ENCODE measurements at regions of chr14 and their contacts with region 1.

Region 1: DNA sequence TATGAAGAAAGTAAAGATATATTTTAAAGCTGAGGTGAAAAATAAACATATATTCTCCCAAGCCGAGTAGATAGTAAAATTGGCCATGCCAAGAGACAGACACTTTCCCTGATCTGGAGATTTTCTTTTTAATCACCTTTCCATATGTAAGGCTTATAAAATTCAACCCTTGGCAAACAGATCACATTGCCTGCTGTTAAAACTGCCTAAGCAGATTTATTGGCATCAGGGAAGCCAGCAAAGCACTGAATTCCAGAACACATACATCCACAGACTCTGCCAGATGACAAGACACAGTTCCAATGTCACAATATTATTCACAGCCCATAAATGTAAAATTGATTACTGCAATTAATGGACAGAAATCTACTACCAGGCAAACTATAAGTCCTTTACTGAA is 78.2 kb upstream of the GARIN2 start:
- DNase-seq: no peak
- ATAC-seq: no peak
- H3K4me3 ChIP-seq: no peak overlapping the region
- H3K27ac ChIP-seq: no peak overlapping the region
- H3K4me1 ChIP-seq: no peaks in the 10 kb centered on the region
- H3K27me3 ChIP-seq: no peaks in the 10 kb centered on the region
- CTCF ChIP-seq: no peak
- EP300 ChIP-seq: no peak
- POLR2A ChIP-seq: no peak
- RAD21 ChIP-seq: no peak

Region 2: GRCh38 chr14:66746316-66747006 is 364.6 kb before region 1 on chr14:
- CTCF ChIA-PET with region 1: no interaction called
- POLR2A ChIA-PET with region 1: no interaction called
- RAD21 ChIA-PET with region 1: no interaction called
- SMC1A ChIA-PET with region 1: no interaction called
- in situ Hi-C with region 1: no loop called
- intact Hi-C with region 1: loop called (anchors 10 kb)
- DNase-seq: no peak
- ATAC-seq: peak; percentile 80
- H3K4me3 ChIP-seq: no peak overlapping the region
- H3K27ac ChIP-seq: no peak overlapping the region
- H3K4me1 ChIP-seq: no peaks in the 10 kb centered on the region
- H3K27me3 ChIP-seq: no peaks in the 10 kb centered on the region
- CTCF ChIP-seq: peak; percentile 40 to 53 (median 43)
- EP300 ChIP-seq: no peak
- POLR2A ChIP-seq: no peak
- RAD21 ChIP-seq: peak; percentile 59

Region 3: DNA sequence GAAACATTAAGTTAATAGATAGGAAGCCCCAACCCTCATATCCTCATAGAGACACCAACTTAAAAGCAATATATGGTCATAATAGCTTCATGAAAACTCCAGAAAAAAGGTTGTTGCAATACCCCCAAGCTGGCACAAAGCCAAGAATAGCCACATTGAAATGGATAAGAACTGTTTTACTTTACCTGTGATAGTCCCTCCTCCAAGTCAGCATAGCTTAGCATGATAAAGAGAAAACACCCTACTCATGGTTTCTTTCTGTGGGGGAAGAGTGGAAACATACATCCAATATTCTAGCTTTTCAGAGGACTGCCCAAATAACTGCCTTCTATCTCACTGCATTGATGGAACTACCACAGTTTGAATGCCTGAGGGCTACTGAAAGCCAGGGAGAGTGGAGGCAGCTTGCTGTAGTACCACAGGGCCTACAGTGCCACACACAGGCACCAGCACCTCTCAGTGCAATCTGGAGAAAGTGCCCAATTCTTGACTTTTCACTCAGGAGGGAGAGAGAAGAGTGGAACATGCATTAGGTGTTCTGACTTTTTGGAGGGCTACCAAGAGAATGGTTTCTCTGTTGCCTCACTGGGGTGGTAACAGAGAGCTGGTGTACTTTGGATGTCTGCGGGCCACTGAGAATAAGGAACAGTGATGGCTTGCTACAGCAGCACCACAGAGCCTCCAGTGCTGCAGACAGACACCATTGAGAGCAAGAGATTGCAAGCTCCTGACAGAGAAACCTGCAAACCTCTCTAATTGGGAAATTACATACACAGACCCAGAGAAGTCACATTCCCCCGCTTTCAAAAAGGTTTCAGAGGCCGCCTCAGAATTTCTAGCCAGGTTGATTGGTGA is 78.9 kb before region 1 on chr14:
- CTCF ChIA-PET with region 1: no interaction called
- POLR2A ChIA-PET with region 1: no interaction called
- RAD21 ChIA-PET with region 1: no interaction called
- SMC1A ChIA-PET with region 1: no interaction called
- in situ Hi-C with region 1: no loop called
- intact Hi-C with region 1: no loop called
- DNase-seq: no peak
- ATAC-seq: no peak
- H3K4me3 ChIP-seq: no peak overlapping the region
- H3K27ac ChIP-seq: no peak overlapping the region
- H3K4me1 ChIP-seq: no peaks in the 10 kb centered on the region
- H3K27me3 ChIP-seq: no peaks in the 10 kb centered on the region
- CTCF ChIP-seq: no peak
- EP300 ChIP-seq: no peak
- POLR2A ChIP-seq: no peak
- RAD21 ChIP-seq: no peak

Region 4: DNA sequence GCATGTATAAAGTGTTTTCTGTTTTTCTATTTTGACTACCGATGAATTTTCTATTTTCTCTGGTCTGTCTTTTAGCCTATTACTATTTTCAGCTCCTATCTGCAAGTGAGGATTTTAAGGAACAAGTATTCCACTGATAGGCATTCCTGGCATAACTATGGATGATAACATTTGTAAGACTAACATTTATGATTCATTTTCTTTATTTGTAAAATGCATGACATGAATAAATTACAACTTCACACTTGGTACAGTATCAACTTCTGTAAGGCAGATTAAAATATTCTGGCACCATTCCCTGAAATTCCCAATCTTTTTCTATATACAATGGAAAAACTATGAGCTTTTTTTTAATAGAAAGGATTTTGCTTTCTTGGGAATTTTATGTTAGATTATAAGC is 42.8 kb before region 1 on chr14:
- CTCF ChIA-PET with region 1: no interaction called
- POLR2A ChIA-PET with region 1: no interaction called
- RAD21 ChIA-PET with region 1: no interaction called
- SMC1A ChIA-PET with region 1: no interaction called
- in situ Hi-C with region 1: no loop called
- intact Hi-C with region 1: no loop called
- DNase-seq: no peak
- ATAC-seq: no peak
- H3K4me3 ChIP-seq: no peak overlapping the region
- H3K27ac ChIP-seq: no peak overlapping the region
- H3K4me1 ChIP-seq: no peaks in the 10 kb centered on the region
- H3K27me3 ChIP-seq: no peaks in the 10 kb centered on the region
- CTCF ChIP-seq: no peak
- EP300 ChIP-seq: no peak
- POLR2A ChIP-seq: no peak
- RAD21 ChIP-seq: no peak

Measured in GM12878 (cell line).